ENCODE measurements at regions of chr4 and their contacts with region 1.

Region 1: DNA sequence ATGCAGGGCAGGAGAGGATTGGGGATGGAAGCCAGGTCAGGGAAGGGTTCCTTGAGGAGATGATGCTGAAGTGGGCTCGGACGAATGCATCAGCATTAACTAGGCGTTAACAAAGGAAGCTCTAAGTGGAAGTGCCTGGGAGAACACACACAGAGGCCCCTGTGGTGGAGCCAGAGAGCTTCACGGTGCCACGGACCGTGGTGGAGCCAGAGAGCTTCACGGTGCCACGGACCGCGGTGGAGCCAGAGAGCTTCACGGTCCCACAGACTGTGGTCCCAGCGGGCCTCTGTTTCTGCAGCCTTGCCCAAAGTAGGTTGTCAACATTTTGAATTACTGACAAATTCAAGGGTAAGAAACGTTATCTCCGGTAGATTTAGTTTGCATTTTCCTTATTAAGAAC is 48.3 kb downstream of the TRIML2 start:
- DNase-seq: no peak
- H3K4me3 Mint-ChIP-seq: no peak overlapping the region
- H3K27ac Mint-ChIP-seq: no peak overlapping the region
- H3K4me1 Mint-ChIP-seq: no peaks in the 10 kb centered on the region
- H3K27me3 Mint-ChIP-seq: no peaks in the 10 kb centered on the region
- CTCF ChIP-seq: no peak

Region 2: GRCh38 chr4:187840814-187841213 is 220.3 kb before region 1 on chr4:
- CTCF ChIA-PET with region 1: no interaction called
- intact Hi-C with region 1: no loop called
- DNase-seq: no peak
- H3K4me3 Mint-ChIP-seq: no peak overlapping the region
- H3K27ac Mint-ChIP-seq: no peak overlapping the region
- H3K4me1 Mint-ChIP-seq: no peaks in the 10 kb centered on the region
- H3K27me3 Mint-ChIP-seq: no peaks in the 10 kb centered on the region
- CTCF ChIP-seq: no peak

Region 3: DNA sequence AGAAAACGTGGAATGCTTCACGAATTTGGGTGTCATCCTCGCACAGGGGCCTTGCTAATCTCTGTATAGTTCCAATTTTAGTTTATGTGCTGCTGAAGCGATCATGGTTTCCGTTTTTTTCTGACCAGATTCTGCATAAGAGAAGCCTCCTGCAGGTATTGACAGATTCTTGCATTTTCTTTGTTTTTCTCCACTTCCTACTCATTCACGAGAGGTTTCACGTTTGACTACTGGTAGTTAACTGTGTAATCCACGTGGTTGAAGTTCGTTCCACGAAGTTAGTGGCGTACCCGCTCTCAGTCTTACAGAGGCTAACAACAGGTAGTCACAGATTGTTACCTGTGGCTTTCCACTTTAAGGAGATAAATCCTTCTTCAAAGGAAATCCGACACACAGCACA is 60.4 kb after region 1 on chr4:
- CTCF ChIA-PET with region 1: no interaction called
- intact Hi-C with region 1: loop called (anchors 2 kb)
- DNase-seq: no peak
- H3K4me3 Mint-ChIP-seq: no peak overlapping the region
- H3K27ac Mint-ChIP-seq: no peak overlapping the region
- H3K4me1 Mint-ChIP-seq: peaks cover 7% of the 10 kb centered on the region
- H3K27me3 Mint-ChIP-seq: no peaks in the 10 kb centered on the region
- CTCF ChIP-seq: no peak

Measured in Calu3 (cell line).